A673 (cell line): ENCODE measurements at regions of chr9 and their contacts with region 1.

Region 1: DNA sequence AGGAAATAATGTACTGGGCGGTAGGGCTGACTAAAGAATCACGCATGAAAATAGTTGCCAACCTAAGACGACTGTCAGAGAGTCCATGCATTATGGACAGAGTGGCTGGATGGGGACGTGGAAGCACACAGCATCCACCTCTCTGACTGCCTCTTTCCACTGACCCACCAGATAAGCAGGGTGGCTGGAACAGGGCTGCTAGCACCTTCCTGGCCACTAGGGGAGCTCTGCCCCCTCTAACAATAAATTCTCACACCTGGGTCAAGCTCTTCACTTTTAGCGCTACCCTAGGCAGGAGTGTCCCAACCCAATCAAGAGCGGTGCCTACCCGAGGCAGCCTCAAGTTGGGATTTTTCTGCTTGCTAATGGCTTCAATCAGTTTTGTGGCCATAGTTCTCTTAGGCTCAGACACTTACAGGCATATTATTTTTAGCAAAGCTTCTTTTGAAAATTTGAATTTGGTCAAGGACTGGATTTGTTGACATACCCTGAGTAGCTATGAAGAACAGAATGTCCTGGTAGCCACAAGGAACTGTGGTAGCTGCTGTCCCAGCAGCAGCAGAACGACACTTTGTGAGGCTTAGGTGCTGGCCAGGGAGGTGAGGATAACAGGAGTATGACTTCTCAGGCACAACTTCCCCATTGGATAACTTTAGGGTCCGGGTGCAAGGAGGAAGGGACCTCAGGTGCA is 6.9 kb upstream of the TPM2 start:
- DNase-seq: peak; percentile 45
- H3K4me3 ChIP-seq: no peak overlapping the region
- H3K27ac ChIP-seq: no peak overlapping the region
- H3K4me1 ChIP-seq: no peaks in the 10 kb centered on the region
- H3K27me3 ChIP-seq: no peaks in the 10 kb centered on the region
- CTCF ChIP-seq: peak; percentile 88

Region 2: GRCh38 chr9:34654323-34655051 is 1042.2 kb before region 1 on chr9:
- CTCF ChIA-PET with region 1: no interaction called
- POLR2A ChIA-PET with region 1: no interaction called
- intact Hi-C with region 1: no loop called
- DNase-seq: peak; percentile 72
- H3K4me3 ChIP-seq: no peak overlapping the region
- H3K27ac ChIP-seq: peak overlapping the region; percentile 74
- H3K4me1 ChIP-seq: peaks cover 25% of the 10 kb centered on the region
- H3K27me3 ChIP-seq: no peaks in the 10 kb centered on the region
- CTCF ChIP-seq: no peak

Region 3: GRCh38 chr9:34675048-34675714 is 1021.5 kb before region 1 on chr9:
- CTCF ChIA-PET with region 1: interaction called, 16 read pairs
- POLR2A ChIA-PET with region 1: no interaction called
- intact Hi-C with region 1: no loop called
- DNase-seq: peak; percentile 88
- H3K4me3 ChIP-seq: no peak overlapping the region
- H3K27ac ChIP-seq: no peak overlapping the region
- H3K4me1 ChIP-seq: no peaks in the 10 kb centered on the region
- H3K27me3 ChIP-seq: no peaks in the 10 kb centered on the region
- CTCF ChIP-seq: peak; percentile 88

Region 4: DNA sequence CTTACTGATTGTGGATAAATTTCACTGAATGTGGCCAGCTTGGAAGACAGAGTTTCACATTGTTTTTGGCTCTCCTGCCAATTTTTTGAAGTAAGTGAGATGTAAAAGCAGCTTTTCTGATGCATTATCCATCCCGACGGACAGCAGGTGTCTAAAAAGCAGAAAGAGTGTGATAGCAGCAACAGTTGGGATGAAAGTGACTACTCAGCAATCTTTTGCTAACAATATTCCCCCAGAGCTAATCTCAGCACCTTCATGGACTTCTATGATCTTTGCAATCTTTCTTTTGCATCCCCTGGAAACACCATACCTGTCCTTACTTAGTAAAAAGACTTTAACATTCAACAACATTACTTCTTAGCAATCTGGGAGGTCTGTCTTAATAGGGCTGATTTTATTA is 83.8 kb before region 1 on chr9:
- CTCF ChIA-PET with region 1: no interaction called
- POLR2A ChIA-PET with region 1: interaction called, 18 read pairs
- intact Hi-C with region 1: no loop called
- DNase-seq: no peak
- H3K4me3 ChIP-seq: no peak overlapping the region
- H3K27ac ChIP-seq: no peak overlapping the region
- H3K4me1 ChIP-seq: no peaks in the 10 kb centered on the region
- H3K27me3 ChIP-seq: peaks cover 25% of the 10 kb centered on the region
- CTCF ChIP-seq: no peak

Region 5: DNA sequence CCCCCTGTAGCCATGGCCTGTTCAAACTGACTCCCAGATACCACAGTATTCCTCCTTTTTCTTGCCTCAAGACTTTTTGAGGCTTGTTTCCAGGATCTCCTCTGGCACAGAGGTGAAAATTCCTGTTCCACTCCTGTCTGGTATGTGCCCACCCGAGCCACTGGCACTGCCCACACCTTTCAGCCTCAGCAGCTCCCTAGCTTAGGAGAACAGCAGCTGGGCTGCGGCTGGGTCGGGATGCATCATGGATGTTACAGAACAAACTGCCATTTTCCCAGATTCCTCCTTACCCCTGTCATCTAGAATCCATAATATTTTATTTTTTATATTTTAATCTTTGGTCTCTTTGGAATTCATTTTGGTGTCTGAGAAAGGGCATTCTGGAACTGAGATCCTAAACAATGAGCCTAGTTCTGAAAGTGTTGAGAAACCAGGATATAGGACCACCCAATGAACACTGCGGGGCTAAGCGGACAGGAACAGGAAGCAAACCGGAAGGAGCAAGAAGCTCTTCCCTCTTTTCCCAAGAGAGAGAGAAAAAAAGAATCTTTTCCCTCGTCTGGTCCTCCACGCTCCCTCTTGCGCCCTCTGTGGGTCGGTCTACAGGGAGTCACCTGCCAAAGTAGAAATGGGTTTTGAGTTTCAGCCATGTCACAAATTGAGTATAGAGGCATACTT is 248.8 kb after region 1 on chr9:
- CTCF ChIA-PET with region 1: no interaction called
- POLR2A ChIA-PET with region 1: no interaction called
- intact Hi-C with region 1: no loop called
- DNase-seq: peak; percentile 96
- H3K4me3 ChIP-seq: peak overlapping the region; percentile 30
- H3K27ac ChIP-seq: no peak overlapping the region
- H3K4me1 ChIP-seq: peaks cover 5% of the 10 kb centered on the region
- H3K27me3 ChIP-seq: no peaks in the 10 kb centered on the region
- CTCF ChIP-seq: peak; percentile 88